Posterior vena cava (tissue), 2 donors: ENCODE measurements at regions of chr5 and their contacts with region 1.

Region 1: DNA sequence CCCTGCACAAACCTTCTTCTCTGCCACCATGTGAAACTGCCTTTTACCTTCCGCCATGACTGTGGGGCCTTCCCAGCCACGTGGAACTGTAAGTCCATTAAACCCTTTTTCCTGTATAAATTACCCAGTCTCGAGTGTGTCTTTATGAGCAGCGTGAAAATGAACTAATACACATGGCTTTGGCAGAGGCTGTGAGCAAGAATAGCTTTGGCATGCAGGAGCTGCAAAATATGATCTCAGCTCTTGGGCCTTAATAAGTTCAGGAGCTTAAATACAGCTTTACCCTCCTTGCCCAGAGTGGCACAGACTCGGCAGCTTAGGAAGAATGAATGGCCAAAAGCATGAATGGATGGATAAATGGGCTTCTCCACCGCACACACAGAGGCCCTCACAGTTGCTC is 15.7 kb upstream of the SLC36A1 start:
- DNase-seq: no peak

Region 2: DNA sequence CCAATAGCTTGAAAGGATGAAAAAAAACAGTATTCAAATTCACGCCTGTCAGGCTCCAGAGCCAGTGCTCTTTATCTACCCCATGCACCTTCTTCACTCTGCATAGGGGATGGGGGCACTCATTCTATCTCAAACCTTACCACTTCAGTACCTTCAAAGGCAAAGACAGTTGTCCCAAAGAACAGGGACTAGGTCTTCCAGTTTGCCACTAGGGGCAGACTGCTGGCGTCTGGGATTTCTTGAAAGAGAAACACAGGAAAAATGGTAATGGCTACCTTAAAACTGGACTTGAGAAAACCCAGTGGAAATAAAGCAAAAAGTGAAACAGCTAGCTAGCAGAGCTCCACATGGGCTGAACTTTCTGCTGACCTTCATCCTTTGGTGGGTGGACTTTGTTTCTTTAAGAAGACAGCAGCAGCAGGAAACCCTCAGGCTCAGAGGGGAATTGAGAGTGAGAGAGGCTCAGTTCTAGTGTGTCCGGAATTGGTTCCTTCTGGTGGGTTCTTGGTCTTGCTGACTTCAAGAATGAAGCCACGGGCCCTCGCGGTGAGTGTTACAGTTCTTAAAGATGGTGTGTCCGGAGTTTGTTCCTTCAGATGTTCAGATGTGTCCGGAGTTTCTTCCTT is 25.2 kb before region 1 on chr5:
- intact Hi-C with region 1: no loop called
- DNase-seq: no peak

Region 3: DNA sequence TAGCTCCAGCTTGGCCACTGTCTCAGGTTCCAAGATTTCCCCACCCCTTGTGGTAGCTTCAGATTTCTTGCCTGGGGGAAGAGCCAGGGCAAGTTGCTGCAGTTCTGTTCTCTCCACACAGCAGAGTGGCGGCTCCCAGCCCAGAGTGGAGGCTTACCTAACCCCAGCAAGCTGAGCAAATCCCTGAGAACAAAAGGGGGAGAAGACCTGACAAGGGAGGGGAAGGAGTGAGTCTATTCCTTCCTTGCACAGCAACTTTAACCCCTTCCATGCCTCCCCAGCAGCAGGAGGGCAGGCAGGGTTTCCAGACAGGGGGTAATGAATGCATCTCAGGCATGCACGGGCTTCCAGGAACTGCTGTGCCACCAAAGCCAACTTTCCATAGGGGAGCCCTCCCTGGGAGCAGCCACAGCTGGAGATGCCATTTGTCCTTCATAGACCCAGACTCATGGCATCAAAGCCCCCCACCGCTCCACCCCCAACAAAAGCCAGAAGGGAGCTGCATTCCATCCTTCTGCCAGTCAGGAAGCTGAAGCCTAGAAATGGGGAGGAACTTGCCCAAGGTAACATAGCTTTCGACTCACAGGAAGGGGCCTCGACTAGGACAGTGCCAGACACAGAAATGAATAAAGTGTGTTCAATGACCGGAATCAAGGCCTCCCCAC is 188.3 kb after region 1 on chr5:
- intact Hi-C with region 1: loop called in 1 of 2 experiments (anchors 1 kb)
- DNase-seq: no peak